Vagina (tissue), 2 donors: ENCODE measurements at regions of chr17 and their contacts with region 1.

Region 1: GRCh38 chr17:49851387-49852291 is 3.8 kb upstream of the TAC4 start:
- DNase-seq: no peak
- H3K4me3 ChIP-seq: peak overlapping the region; percentile 61 to 89
- H3K27ac ChIP-seq: peak overlapping the region; percentile 56
- H3K4me1 ChIP-seq: peaks cover 13% of the 10 kb centered on the region
- H3K27me3 ChIP-seq: no peaks in the 10 kb centered on the region
- CTCF ChIP-seq: peak; percentile 44 to 71 (median 60)
- POLR2A ChIP-seq: no peak

Region 2: DNA sequence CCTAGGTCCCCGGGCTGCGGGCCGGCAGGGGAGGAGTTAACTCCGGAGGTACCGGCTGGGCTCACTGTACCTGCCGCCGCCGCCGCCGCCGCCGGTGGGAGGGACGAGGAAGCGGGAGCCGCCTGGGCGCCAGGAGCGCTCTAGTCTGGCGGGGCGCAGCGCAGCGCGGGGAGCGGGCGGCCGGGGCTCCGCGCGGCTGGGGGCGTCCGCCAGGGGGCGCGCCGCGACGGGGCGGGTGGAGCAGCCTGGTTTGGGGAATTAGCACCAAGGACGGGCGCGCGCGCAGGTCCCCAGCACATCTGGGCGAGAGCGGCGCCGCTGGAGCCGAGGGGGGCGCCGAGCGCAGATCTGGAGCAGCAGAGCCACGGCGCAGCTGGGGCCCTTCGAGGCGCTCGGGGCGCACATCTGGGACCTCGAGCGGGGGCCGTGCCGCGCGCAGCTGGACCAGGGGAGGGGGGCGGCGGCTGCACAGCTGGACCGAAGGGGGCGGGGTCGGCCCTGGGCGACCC is 276.0 kb before region 1 on chr17 and contains the start of gene NXPH3:
- intact Hi-C with region 1: loop called (anchors 10 kb)
- DNase-seq: peak in 1 of 2 donors; percentile 75
- H3K4me3 ChIP-seq: peak within 1 kb of the TSS; percentile 75 to 80
- H3K27ac ChIP-seq: peak within 1 kb of the TSS; percentile 90
- H3K4me1 ChIP-seq: peaks cover 43% of the 10 kb centered on the region
- H3K27me3 ChIP-seq: no peaks in the 10 kb centered on the region
- CTCF ChIP-seq: peak in 2 of 3 experiments; percentile 32 to 51
- POLR2A ChIP-seq: peak in 1 of 2 donors; percentile 12
- total RNA-seq, gene NXPH3: 18.4 TPM

Region 3: DNA sequence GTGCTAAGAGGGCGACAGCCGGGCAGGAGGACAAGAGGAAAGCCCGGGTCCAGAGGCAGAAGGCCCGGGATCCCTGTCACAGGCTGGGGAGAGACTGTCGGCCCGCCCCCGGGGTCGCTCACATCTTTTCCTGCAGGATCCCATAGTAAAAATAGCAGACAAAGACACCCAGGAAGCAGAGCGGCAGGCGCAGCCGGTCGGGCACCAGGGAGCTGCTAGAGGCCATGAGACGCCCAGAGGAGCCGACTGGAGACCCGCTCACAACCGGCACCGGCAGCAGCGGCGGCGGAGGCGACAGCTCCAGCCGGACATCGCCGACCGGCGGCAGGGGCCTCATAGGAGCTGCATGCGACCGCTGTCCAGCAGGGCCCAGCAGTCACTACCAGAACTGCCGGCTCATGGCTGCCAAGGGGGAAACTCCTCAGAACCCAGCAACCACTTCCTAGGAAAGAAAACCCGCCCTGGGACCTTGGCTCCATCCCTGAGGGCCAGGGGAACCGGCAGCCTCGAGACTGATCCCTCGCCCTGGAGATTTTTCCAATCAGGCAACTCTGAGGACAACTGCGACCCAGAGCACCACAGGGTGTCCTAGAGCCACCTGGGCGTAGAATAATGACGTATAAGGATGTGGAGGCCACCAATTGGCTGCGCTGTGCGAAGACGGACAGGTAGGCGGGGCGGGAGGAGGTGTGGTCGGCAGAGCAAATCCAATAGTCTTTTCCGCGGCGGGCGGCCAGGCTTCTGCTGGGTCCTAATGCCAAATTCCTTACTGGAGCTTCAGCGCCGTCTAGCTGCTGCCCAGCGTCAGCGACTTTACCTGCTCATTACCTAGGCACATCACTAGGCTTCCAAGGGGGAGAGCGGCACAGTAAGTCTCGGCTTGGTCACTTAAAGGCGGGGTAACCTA is 143.8 kb before region 1 on chr17 and contains the start of gene SLC35B1:
- intact Hi-C with region 1: loop called (anchors 10 kb)
- DNase-seq: peak; percentile 98
- H3K4me3 ChIP-seq: peak within 1 kb of the TSS; percentile 77 to 78
- H3K27ac ChIP-seq: peak within 1 kb of the TSS; percentile 93
- H3K4me1 ChIP-seq: peaks cover 36% of the 10 kb centered on the region
- H3K27me3 ChIP-seq: no peaks in the 10 kb centered on the region
- CTCF ChIP-seq: peak; percentile 26 to 43 (median 35)
- POLR2A ChIP-seq: no peak
- total RNA-seq, gene SLC35B1: 42.0 TPM